ENCODE measurements at regions of chr20 and their contacts with region 1.

Region 1: GRCh38 chr20:54029643-54030042 is 40.8 kb downstream of the BCAS1 start:
- DNase-seq: no peak
- ATAC-seq: no peak
- H3K4me3 ChIP-seq: no peak overlapping the region
- H3K27ac ChIP-seq: no peak overlapping the region
- H3K4me1 ChIP-seq: no peaks in the 10 kb centered on the region
- H3K27me3 ChIP-seq: no peaks in the 10 kb centered on the region
- CTCF ChIP-seq: no peak
- EP300 ChIP-seq: no peak
- POLR2A ChIP-seq: no peak
- RAD21 ChIP-seq: no peak

Region 2: DNA sequence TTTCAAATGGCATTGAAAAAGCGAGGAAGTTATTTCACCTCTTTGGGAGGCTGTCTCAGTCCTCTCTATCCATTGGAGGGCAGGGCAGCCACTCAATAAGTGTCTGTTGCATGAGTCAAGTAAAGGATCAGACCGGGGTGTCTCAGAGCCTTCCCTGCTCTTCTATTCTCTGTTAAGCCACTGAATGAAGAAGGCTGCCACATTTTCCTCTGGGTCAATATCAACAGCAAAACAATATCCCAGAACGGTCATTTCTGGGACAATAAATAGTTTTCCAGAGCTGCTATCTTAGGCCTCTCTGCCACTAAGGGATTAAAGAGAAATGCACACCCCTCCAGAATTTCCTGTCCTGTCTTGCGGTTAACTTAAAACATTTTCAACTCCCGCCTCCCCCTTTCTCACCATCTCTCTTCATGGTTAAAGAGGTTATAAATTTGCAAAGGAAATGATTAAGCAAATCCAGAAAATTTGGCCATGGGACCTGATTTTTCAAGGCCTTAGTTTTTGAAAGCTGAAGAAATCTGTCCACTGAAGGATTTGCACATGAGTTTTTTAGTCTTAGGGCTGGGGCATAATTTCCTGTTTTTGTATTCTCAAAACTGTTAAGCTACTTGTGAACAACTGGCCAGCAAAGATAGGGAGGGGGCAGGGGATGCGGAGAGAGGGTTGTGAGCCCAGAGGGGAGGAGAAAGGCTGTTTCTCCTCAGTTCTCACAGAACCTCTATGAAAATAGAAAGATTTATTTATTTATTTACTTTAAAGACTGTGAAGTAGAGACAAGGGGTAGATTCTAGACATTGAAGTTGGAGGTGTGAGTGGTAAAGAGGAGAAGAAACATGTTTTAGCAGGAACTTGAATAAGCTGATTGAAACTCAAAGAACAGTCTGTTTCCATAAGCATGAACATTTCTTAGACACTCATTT is 95.0 kb before region 1 on chr20:
- CTCF ChIA-PET with region 1: no interaction called
- POLR2A ChIA-PET with region 1: no interaction called
- RAD21 ChIA-PET with region 1: no interaction called
- SMC1A ChIA-PET with region 1: no interaction called
- in situ Hi-C with region 1: no loop called
- intact Hi-C with region 1: no loop called
- DNase-seq: no peak
- ATAC-seq: peak; percentile 77
- H3K4me3 ChIP-seq: peak overlapping the region; percentile 33; the same call in 1 of the 2 replicates
- H3K27ac ChIP-seq: peak overlapping the region; percentile 91
- H3K4me1 ChIP-seq: peaks cover 52% of the 10 kb centered on the region
- H3K27me3 ChIP-seq: no peaks in the 10 kb centered on the region
- CTCF ChIP-seq: 0 out of 6 replicates have a peak, but pooled peaks of 1 of the 3 experiments have one; percentile 4
- EP300 ChIP-seq: no peak
- POLR2A ChIP-seq: 0 out of 2 replicates have a peak, but pooled peaks have one; percentile 4
- RAD21 ChIP-seq: 0 out of 2 replicates have a peak, but pooled peaks have one; percentile 12

Region 3: DNA sequence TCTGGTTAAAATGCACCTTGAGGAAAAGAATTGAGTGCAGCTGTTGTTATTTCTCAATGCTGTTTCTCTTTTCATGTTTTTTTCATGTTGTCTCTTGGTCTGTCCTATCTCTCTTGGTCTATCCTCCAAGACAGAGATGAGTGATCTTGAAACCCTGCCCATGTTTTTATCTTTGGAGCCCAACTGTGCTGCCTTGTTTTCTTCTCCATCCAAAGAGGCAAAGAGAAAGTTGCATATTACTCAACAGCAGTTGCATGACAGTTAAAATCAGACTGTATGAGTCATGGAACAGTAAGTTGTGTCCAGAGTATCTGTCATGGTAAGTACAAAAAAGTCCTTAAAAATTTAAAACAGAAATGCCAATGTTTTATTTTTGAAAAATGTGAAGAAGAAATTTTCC is 14.5 kb after region 1 on chr20:
- CTCF ChIA-PET with region 1: interaction called, 7 read pairs
- POLR2A ChIA-PET with region 1: no interaction called
- RAD21 ChIA-PET with region 1: no interaction called
- SMC1A ChIA-PET with region 1: interaction called, 6 read pairs
- in situ Hi-C with region 1: no loop called
- intact Hi-C with region 1: loop called (anchors 1 kb)
- DNase-seq: no peak
- ATAC-seq: peak; percentile 77
- H3K4me3 ChIP-seq: no peak overlapping the region
- H3K27ac ChIP-seq: no peak overlapping the region; the same call in 1 of the 2 replicates
- H3K4me1 ChIP-seq: peaks cover 13% of the 10 kb centered on the region
- H3K27me3 ChIP-seq: no peaks in the 10 kb centered on the region
- CTCF ChIP-seq: no peak
- EP300 ChIP-seq: no peak
- POLR2A ChIP-seq: no peak
- RAD21 ChIP-seq: no peak

Region 4: DNA sequence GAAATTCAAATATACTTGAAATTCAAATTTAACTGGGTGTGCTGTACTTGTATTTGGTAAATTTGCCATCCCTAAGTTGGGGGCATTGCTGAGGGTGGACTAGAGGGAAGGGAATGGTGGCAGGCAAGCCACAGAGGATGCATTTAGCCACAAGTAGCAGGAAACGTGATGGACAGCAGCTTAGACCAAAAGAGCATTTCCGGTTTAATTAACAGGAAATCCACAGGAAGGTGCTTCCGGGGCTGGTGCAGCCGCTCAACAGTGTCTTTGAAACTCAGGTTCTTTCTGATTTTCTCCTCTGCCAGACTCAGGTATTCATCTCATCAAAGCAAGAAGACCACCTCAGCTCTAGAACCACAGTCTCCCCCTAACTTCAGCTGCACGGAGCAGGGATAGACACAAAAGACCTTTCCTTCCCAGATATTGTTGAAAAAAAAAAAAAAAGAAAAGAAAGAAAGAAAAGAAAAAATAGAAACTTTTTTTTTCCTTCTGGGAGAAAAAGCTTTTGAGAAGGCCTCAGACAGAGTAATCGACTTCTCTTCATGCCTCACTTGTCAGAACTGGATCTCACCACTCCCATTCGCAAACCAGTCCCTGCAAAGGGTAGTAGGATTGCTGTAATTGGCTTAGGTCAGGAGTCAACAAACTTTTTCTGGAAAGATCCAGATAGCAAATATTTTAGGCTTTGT is 48.8 kb after region 1 on chr20:
- CTCF ChIA-PET with region 1: no interaction called
- POLR2A ChIA-PET with region 1: no interaction called
- RAD21 ChIA-PET with region 1: no interaction called
- SMC1A ChIA-PET with region 1: no interaction called
- in situ Hi-C with region 1: no loop called
- intact Hi-C with region 1: no loop called
- DNase-seq: no peak
- ATAC-seq: peak; percentile 52
- H3K4me3 ChIP-seq: 0 out of 2 replicates have a peak overlapping the region, but pooled peaks have one; percentile 5
- H3K27ac ChIP-seq: peak overlapping the region; percentile 13; the same call in 1 of the 2 replicates
- H3K4me1 ChIP-seq: peaks cover 28% of the 10 kb centered on the region
- H3K27me3 ChIP-seq: no peaks in the 10 kb centered on the region
- CTCF ChIP-seq: no peak
- EP300 ChIP-seq: no peak
- POLR2A ChIP-seq: no peak
- RAD21 ChIP-seq: no peak

Region 5: GRCh38 chr20:54093423-54094267 is 64.0 kb after region 1 on chr20:
- CTCF ChIA-PET with region 1: no interaction called
- POLR2A ChIA-PET with region 1: no interaction called
- RAD21 ChIA-PET with region 1: no interaction called
- SMC1A ChIA-PET with region 1: no interaction called
- in situ Hi-C with region 1: no loop called
- intact Hi-C with region 1: no loop called
- DNase-seq: no peak
- ATAC-seq: no peak
- H3K4me3 ChIP-seq: no peak overlapping the region
- H3K27ac ChIP-seq: no peak overlapping the region
- H3K4me1 ChIP-seq: peaks cover 8% of the 10 kb centered on the region
- H3K27me3 ChIP-seq: no peaks in the 10 kb centered on the region
- CTCF ChIP-seq: no peak
- EP300 ChIP-seq: no peak
- POLR2A ChIP-seq: no peak
- RAD21 ChIP-seq: no peak